PC-9 (cell line): ENCODE measurements at regions of chr4 and their contacts with region 1.

Region 1: GRCh38 chr4:45662997-45663396 is 460.9 kb downstream of the GABRG1 start:
- DNase-seq: peak; percentile 51 to 65
- H3K4me3 ChIP-seq: no peak overlapping the region
- H3K27ac ChIP-seq: no peak overlapping the region
- H3K4me1 ChIP-seq: no peaks in the 10 kb centered on the region
- H3K27me3 ChIP-seq: no peaks in the 10 kb centered on the region
- CTCF ChIP-seq: no peak

Region 2: GRCh38 chr4:45621926-45622325 is 41.1 kb before region 1 on chr4:
- CTCF ChIA-PET with region 1: no interaction called
- POLR2A ChIA-PET with region 1: interaction called, 3 read pairs
- intact Hi-C with region 1: loop called (anchors 1 kb)
- DNase-seq: peak; percentile 12 to 66
- H3K4me3 ChIP-seq: no peak overlapping the region
- H3K27ac ChIP-seq: no peak overlapping the region
- H3K4me1 ChIP-seq: no peaks in the 10 kb centered on the region
- H3K27me3 ChIP-seq: no peaks in the 10 kb centered on the region
- CTCF ChIP-seq: no peak